ENCODE measurements at regions of chr12 and their contacts with region 1.

Region 1: DNA sequence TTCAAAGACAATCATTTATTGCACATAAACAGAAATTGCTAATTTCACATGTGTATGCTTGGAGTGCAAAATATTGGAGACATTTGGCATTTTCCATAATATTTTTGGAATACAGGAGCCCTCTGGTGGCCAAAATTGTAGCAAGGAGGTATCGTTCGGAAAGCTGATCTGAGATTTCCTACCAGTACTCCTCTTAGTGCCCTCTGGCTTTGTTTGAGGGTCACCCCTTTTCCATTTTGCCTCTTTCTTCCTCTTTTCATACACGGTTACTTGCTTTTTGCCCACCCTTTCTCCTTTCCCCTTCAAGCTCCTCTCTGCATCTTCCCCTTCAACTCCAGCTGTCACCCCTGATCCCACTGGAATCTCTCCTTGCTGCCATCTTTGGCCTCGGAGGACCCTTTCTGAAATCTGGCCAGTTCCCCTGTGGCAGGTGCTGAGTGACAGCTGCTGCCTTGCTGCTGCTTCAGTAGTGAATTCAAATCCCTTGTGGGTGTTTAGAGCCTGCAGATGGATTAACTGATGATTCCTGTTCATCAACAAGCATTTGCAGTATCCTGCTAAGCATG is 164.6 kb upstream of the PARP11 start:
- DNase-seq: no peak
- ATAC-seq: no peak

Region 2: DNA sequence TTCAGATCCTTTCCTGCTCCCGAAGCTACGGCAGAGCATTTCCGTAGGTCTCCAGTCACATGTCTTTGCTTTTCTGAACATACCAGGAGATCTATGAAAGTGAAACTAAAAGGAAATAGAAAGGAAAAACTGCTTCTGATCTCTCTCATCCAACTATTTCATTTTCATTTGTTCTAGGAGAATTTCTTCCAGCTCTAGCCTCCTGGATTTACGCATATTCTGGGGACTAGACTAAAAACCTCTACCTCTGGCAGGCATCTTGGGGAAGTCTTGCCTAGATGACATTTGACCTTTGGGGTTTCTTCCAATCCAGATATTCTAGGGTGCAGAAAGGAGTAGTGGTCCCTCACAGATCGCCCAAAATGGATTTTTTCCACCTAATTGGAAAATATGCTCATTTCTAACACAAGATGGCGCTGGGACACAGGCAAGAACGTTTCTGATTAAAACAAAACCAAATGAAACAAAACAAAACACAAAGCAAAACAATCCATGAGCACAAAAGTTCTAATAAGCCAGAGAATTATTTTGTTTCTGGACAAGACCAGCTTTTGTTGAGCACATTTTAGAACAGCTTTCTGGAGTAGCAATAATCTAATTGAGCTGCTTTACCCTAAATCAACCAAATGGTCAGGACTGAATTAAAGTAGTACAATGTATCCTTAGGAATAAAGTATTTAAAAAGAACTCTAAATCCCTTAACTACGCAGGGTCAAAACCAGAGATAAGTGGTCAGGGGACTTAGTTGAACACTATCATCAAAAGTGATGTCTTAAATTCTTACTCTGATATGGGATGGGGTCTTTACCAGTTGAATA is 152.3 kb before region 1 on chr12:
- intact Hi-C with region 1: loop called (anchors 2 kb)
- DNase-seq: no peak
- ATAC-seq: peak; percentile 39

Region 3: DNA sequence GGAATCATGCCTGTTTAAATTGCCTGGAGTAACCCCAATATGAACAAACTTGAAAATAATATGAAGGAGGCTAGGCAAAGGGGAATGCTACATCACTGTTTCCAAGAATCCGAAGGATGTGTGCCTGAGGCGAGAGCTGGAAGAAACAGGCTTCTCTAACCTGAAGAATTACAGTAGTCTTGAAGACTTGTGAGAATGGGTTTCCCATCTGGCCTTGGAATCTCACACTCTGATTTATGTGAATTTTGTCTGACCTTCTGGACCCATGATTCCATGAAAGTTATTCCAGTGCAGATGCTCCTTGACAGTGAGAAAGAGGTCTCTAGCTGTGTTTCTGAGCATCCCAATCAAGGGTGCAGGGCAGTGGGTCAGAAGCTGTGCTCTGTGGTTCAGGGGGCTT is 42.5 kb before region 1 on chr12:
- intact Hi-C with region 1: loop called (anchors 2 kb)
- DNase-seq: no peak
- ATAC-seq: no peak